T-cell (primary cell): ENCODE measurements at regions of chr6 and their contacts with region 1.

Region 1: DNA sequence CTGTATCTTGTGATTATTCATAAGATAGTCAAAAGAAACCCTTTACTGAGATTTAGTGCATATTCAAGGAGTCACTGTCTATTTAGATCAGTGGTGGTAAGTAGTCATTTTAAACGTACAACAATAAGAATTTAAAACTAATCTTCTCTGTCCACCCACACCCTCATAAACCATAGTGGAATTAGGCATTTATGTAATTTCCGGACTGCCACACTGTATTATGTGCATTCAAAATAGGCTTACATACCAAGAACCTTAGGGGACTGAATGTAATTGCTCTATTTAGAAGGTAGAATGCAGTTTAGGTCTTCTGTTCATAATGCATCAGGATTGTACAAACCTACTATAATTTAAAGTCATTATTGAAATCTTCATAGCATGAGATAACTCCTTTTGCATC is 685.4 kb downstream of the TENT5A start:
- DNase-seq: no peak
- ATAC-seq: no peak
- H3K4me3 ChIP-seq: no peak overlapping the region
- H3K4me3 Mint-ChIP-seq: no peak overlapping the region
- H3K27ac ChIP-seq: no peak overlapping the region
- H3K27ac Mint-ChIP-seq: no peak overlapping the region
- H3K4me1 ChIP-seq: no peaks in the 10 kb centered on the region
- H3K4me1 Mint-ChIP-seq: no peaks in the 10 kb centered on the region
- H3K27me3 ChIP-seq: no peaks in the 10 kb centered on the region
- H3K27me3 Mint-ChIP-seq: no peaks in the 10 kb centered on the region

Region 2: GRCh38 chr6:80872199-80872950 is 194.7 kb before region 1 on chr6:
- CTCF ChIA-PET with region 1: no interaction called
- POLR2A ChIA-PET with region 1: interaction called in 1 of 2 experiments, 12 read pairs
- DNase-seq: no peak
- ATAC-seq: no peak
- H3K4me3 ChIP-seq: no peak overlapping the region
- H3K4me3 Mint-ChIP-seq: no peak overlapping the region
- H3K27ac ChIP-seq: no peak overlapping the region
- H3K27ac Mint-ChIP-seq: no peak overlapping the region
- H3K4me1 ChIP-seq: no peaks in the 10 kb centered on the region
- H3K4me1 Mint-ChIP-seq: no peaks in the 10 kb centered on the region
- H3K27me3 ChIP-seq: no peaks in the 10 kb centered on the region
- H3K27me3 Mint-ChIP-seq: no peaks in the 10 kb centered on the region

Region 3: GRCh38 chr6:80976336-80976735 is 90.7 kb before region 1 on chr6:
- CTCF ChIA-PET with region 1: no interaction called
- POLR2A ChIA-PET with region 1: no interaction called
- DNase-seq: no peak
- ATAC-seq: no peak
- H3K4me3 ChIP-seq: no peak overlapping the region
- H3K4me3 Mint-ChIP-seq: no peak overlapping the region
- H3K27ac ChIP-seq: no peak overlapping the region
- H3K27ac Mint-ChIP-seq: no peak overlapping the region
- H3K4me1 ChIP-seq: no peaks in the 10 kb centered on the region
- H3K4me1 Mint-ChIP-seq: no peaks in the 10 kb centered on the region
- H3K27me3 ChIP-seq: no peaks in the 10 kb centered on the region
- H3K27me3 Mint-ChIP-seq: no peaks in the 10 kb centered on the region

Region 4: GRCh38 chr6:81148744-81149143 is 81.7 kb after region 1 on chr6:
- CTCF ChIA-PET with region 1: no interaction called
- POLR2A ChIA-PET with region 1: no interaction called
- DNase-seq: no peak
- ATAC-seq: no peak
- H3K4me3 ChIP-seq: no peak overlapping the region
- H3K4me3 Mint-ChIP-seq: no peak overlapping the region
- H3K27ac ChIP-seq: no peak overlapping the region
- H3K27ac Mint-ChIP-seq: no peak overlapping the region
- H3K4me1 ChIP-seq: no peaks in the 10 kb centered on the region
- H3K4me1 Mint-ChIP-seq: no peaks in the 10 kb centered on the region
- H3K27me3 ChIP-seq: no peaks in the 10 kb centered on the region
- H3K27me3 Mint-ChIP-seq: no peaks in the 10 kb centered on the region

Region 5: DNA sequence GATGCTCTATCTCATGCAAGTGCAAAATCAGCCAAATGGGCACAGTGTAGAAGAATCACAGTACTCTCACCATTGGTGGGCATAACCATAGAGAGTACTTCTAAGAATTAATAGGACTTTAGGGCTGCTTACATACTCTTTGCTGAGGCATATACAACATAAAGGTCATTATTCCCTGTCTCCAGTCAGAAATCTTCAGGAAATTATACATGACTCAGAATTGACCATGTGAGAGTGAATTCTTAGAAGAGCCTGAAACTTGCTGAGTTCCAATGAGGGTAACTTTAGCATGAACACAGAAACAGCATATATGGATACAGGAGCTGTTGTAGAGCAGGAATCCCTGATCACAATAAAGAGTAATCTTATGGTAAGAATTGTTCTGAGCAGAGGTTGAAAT is 186.8 kb after region 1 on chr6:
- CTCF ChIA-PET with region 1: no interaction called
- POLR2A ChIA-PET with region 1: no interaction called
- DNase-seq: no peak
- ATAC-seq: no peak
- H3K4me3 ChIP-seq: no peak overlapping the region
- H3K4me3 Mint-ChIP-seq: no peak overlapping the region
- H3K27ac ChIP-seq: no peak overlapping the region
- H3K27ac Mint-ChIP-seq: no peak overlapping the region
- H3K4me1 ChIP-seq: no peaks in the 10 kb centered on the region
- H3K4me1 Mint-ChIP-seq: no peaks in the 10 kb centered on the region
- H3K27me3 ChIP-seq: no peaks in the 10 kb centered on the region
- H3K27me3 Mint-ChIP-seq: no peaks in the 10 kb centered on the region